ENCODE measurements at regions of chr6 and their contacts with region 1.

Region 1: DNA sequence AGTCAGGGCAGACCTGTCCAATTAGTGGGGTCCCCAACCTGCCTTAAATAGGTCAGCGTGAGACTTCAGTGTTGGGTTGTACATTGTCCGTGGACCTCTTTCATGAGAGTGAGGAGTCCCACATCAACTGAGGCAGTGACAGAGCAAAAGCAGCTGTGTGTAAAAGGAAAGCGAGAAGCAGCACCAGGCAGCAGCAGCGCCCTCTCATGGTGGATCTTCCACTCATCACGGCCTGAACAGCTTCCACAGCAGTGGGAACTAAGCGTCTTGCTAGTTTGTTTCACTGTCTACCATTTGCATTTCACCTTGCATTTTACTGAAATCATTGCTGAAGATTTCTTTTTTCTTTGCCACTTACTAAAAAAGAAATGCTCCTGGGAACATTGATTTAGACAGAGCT is 333.8 kb downstream of the PKHD1 start:
- DNase-seq: peak; percentile 11
- H3K4me3 Mint-ChIP-seq: no peak overlapping the region
- H3K27ac Mint-ChIP-seq: no peak overlapping the region
- H3K4me1 Mint-ChIP-seq: no peaks in the 10 kb centered on the region
- H3K27me3 Mint-ChIP-seq: no peaks in the 10 kb centered on the region
- CTCF ChIP-seq: peak; percentile 32

Region 2: GRCh38 chr6:51559059-51559458 is 194.6 kb before region 1 on chr6:
- CTCF ChIA-PET with region 1: no interaction called
- intact Hi-C with region 1: loop called (anchors 10 kb)
- DNase-seq: peak; percentile 30
- H3K4me3 Mint-ChIP-seq: no peak overlapping the region
- H3K27ac Mint-ChIP-seq: no peak overlapping the region
- H3K4me1 Mint-ChIP-seq: no peaks in the 10 kb centered on the region
- H3K27me3 Mint-ChIP-seq: no peaks in the 10 kb centered on the region
- CTCF ChIP-seq: peak; percentile 33